ENCODE measurements at regions of chr12 and their contacts with region 1.

Region 1: DNA sequence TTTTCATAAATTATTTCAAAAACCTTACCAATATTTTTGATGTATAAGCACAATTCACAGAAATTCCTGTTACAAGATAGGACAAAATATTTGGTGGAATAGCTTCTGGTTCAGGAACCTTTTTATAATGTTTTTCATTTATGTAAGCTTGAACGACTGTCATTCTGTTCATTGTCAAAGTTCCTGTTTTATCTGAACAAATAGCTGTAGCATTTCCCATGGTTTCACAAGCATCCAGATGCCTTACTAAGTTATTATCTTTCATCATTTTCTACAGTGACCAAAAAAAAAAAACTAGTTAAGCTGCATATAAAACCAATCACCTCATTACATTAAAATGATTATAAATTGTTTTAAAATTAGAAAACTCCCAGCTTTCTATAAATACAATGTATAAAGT is 87.1 kb downstream of the ATP2B1 start:
- DNase-seq: no peak
- ATAC-seq: no peak
- H3K4me3 ChIP-seq: no peak overlapping the region
- H3K4me3 Mint-ChIP-seq: no peak overlapping the region
- H3K27ac ChIP-seq: no peak overlapping the region
- H3K27ac Mint-ChIP-seq: no peak overlapping the region
- H3K4me1 ChIP-seq: no peaks in the 10 kb centered on the region
- H3K4me1 Mint-ChIP-seq: no peaks in the 10 kb centered on the region
- H3K27me3 ChIP-seq: no peaks in the 10 kb centered on the region
- H3K27me3 Mint-ChIP-seq: no peaks in the 10 kb centered on the region
- CTCF ChIP-seq: no peak

Region 2: DNA sequence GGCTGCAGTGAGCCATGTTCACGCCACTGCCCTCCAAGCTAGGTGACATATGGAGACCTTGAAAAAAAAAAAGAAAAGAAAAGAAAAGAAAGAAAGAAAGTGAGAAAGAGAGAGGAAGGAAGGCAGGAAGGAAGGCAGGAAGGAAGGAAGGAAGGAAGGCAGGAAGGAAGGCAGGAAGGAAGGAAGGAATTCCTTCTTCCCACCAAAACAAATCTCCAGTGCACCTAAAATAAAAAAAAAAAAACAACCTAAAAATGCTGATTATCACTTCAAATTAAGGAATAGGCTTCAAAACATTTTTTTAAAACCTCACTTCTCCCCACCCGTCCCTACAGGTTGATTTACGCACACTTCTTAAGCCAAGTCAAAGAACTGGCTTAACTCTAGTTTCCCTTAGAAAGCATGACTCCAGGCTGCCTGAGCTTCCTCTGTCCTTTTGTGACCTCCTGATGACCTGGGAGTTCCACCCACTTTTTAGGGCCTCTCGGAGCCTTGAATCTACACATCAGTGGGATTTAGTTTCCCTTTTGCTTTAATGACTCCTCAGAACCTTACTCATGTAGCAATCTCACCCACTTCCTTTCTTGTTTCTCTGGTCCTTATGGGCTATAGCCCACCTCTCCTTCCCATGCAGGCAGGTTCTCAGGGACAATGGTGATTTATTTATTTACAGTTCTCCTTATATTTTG is 287.8 kb before region 1 on chr12:
- CTCF ChIA-PET with region 1: no interaction called
- POLR2A ChIA-PET with region 1: no interaction called
- intact Hi-C with region 1: no loop called
- DNase-seq: peak; percentile 20
- ATAC-seq: no peak
- H3K4me3 ChIP-seq: peak overlapping the region in 3 of 5 experiments; percentile 3 to 31 (median 7)
- H3K4me3 Mint-ChIP-seq: peak overlapping the region; percentile 70
- H3K27ac ChIP-seq: no peak overlapping the region
- H3K27ac Mint-ChIP-seq: no peak overlapping the region
- H3K4me1 ChIP-seq: peaks cover 9 to 10% of the 10 kb centered on the region in 2 donors
- H3K4me1 Mint-ChIP-seq: peaks cover 10% of the 10 kb centered on the region
- H3K27me3 ChIP-seq: no peaks in the 10 kb centered on the region
- H3K27me3 Mint-ChIP-seq: peaks cover 3% of the 10 kb centered on the region
- CTCF ChIP-seq: no peak

Region 3: DNA sequence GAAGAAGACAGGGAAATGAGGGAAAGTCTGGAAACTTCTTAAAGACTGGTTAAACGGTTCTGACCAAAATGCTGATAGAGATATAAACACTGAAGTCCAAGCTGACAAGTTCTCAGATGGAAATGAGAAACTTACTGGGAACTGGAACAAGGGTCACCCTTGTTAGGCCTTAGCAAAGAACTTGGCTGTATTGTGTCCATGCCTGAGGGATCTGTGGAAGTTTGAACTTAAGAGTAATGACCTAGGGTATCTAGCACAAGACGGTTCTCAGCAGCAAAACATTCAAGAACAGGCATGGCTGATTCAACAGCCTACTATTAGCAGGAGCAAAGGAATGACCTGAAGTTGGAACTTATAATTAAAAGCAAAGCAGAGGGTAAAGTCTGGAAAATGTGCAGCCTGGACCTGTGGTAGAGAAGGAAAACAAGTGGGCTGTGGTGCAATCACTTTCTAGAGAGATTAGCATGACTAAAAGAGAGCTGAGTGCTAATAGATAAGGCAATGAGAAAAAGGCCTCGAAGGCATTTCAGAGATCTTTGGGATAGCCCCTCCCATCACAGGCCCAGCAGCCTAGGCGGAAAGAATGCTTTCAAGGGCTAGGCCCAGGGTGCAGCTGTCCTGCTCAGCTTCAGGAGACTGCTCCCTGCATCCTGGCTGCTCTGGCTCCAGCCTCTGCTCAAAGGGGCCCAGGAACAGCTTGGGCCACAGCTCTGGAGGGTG is 26.9 kb after region 1 on chr12:
- CTCF ChIA-PET with region 1: no interaction called
- POLR2A ChIA-PET with region 1: no interaction called
- intact Hi-C with region 1: loop called (anchors 2 kb)
- DNase-seq: no peak
- ATAC-seq: no peak
- H3K4me3 ChIP-seq: no peak overlapping the region
- H3K4me3 Mint-ChIP-seq: no peak overlapping the region
- H3K27ac ChIP-seq: no peak overlapping the region
- H3K27ac Mint-ChIP-seq: no peak overlapping the region
- H3K4me1 ChIP-seq: peaks cover 4 to 17% of the 10 kb centered on the region in 2 donors
- H3K4me1 Mint-ChIP-seq: peaks cover 62% of the 10 kb centered on the region
- H3K27me3 ChIP-seq: no peaks in the 10 kb centered on the region
- H3K27me3 Mint-ChIP-seq: no peaks in the 10 kb centered on the region
- CTCF ChIP-seq: no peak

Region 4: DNA sequence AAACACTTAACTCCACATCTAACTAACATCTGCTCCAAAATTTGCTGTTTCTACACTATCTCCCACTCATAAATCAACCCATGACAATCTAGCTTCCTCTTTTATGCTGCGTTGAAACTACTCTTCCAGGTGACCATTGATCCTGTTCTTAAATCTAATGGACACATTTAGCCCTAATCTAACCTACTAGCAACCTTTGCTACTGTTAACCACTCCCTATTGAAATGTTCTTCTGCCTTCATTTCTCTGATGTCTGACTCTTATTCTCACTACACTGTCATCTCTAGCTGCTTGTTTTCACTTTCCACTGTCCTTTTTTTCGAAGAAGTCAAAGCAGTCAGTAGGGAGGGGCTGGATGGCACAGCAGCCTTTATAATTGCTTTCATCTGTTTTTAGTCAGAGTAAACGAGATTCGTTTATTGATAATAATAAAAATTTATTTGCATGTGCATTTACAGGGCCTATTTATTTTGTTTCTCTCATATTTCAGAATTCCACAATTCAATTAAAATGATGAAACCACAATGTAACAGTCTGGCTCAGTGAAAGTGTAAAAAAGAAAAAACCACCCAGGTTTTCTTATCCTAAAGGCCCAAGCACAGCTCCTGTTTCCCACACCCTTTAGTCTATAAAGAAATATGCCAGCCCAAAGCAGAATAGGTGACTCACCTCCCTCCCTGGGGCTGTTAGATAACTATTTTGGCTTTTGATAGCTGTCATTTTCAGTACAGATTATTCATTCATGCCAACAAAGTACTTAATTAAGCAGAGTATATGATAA is 42.2 kb after region 1 on chr12:
- CTCF ChIA-PET with region 1: interaction called, 3 read pairs
- POLR2A ChIA-PET with region 1: no interaction called
- intact Hi-C with region 1: loop called (anchors 5 kb)
- DNase-seq: peak; percentile 56
- ATAC-seq: peak; percentile 50
- H3K4me3 ChIP-seq: no peak overlapping the region
- H3K4me3 Mint-ChIP-seq: peak overlapping the region; percentile 42
- H3K27ac ChIP-seq: peak overlapping the region in 1 of 2 donors; percentile 61
- H3K27ac Mint-ChIP-seq: peak overlapping the region; percentile 4
- H3K4me1 ChIP-seq: peaks cover 41 to 74% of the 10 kb centered on the region in 2 donors
- H3K4me1 Mint-ChIP-seq: peaks cover 79% of the 10 kb centered on the region
- H3K27me3 ChIP-seq: no peaks in the 10 kb centered on the region
- H3K27me3 Mint-ChIP-seq: no peaks in the 10 kb centered on the region
- CTCF ChIP-seq: no peak